ENCODE measurements at regions of chr3 and their contacts with region 1.

Region 1: GRCh38 chr3:109023656-109024254 is 70.1 kb upstream of the GUCA1C start:
- DNase-seq: peak; percentile 13
- H3K4me3 ChIP-seq: no peak overlapping the region
- H3K27ac ChIP-seq: no peak overlapping the region
- H3K27me3 ChIP-seq: no peaks in the 10 kb centered on the region
- CTCF ChIP-seq: peak; percentile 77

Region 2: DNA sequence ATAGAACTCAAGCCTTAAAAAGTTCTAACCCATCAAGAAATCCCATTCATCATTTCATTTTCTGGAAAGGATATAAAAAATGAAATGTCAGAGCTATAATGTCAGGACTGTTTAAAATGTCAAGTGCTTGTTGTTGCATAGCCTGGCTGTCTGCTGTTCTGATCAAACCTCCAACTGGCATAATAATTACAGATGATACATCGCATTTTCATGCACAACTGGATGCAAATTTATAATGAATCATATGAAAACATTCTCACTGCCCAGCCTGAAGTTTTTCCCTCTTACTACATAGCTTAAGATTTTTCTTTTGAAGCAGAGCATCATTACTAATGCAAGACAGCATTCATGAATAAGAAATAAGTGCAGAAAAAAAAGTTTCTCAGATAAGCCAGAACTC is 116.6 kb before region 1 on chr3:
- CTCF ChIA-PET with region 1: no interaction called
- POLR2A ChIA-PET with region 1: no interaction called
- DNase-seq: no peak
- H3K4me3 ChIP-seq: no peak overlapping the region
- H3K27ac ChIP-seq: no peak overlapping the region
- H3K27me3 ChIP-seq: no peaks in the 10 kb centered on the region
- CTCF ChIP-seq: no peak

Region 3: GRCh38 chr3:109005443-109005842 is 18.3 kb before region 1 on chr3:
- CTCF ChIA-PET with region 1: interaction called, 10 read pairs
- POLR2A ChIA-PET with region 1: no interaction called
- DNase-seq: no peak
- H3K4me3 ChIP-seq: no peak overlapping the region
- H3K27ac ChIP-seq: no peak overlapping the region
- H3K27me3 ChIP-seq: no peaks in the 10 kb centered on the region
- CTCF ChIP-seq: no peak

Region 4: DNA sequence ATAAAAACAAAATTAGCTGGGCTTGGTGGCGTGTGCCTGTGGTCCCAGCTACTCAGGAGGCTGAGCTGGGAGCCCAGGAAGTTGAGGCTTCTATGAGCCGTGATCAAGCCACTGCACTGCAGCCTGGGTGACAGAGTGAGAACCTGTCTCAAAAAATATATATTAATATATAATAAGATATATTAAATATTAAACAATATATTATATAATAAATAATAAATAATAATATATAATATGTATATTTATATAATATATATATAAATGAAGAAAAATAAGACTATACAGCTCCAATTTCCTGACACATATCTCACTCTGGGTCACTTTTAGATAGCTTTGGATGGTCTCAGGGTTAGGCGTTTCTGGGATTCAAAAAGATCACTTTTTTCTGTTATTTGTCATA is 387.8 kb after region 1 on chr3:
- CTCF ChIA-PET with region 1: no interaction called
- POLR2A ChIA-PET with region 1: no interaction called
- DNase-seq: no peak
- H3K4me3 ChIP-seq: no peak overlapping the region
- H3K27ac ChIP-seq: no peak overlapping the region
- H3K27me3 ChIP-seq: no peaks in the 10 kb centered on the region
- CTCF ChIP-seq: no peak

Measured in AG04450 (cell line).